ENCODE measurements at regions of chr14 and their contacts with region 1.

Region 1: DNA sequence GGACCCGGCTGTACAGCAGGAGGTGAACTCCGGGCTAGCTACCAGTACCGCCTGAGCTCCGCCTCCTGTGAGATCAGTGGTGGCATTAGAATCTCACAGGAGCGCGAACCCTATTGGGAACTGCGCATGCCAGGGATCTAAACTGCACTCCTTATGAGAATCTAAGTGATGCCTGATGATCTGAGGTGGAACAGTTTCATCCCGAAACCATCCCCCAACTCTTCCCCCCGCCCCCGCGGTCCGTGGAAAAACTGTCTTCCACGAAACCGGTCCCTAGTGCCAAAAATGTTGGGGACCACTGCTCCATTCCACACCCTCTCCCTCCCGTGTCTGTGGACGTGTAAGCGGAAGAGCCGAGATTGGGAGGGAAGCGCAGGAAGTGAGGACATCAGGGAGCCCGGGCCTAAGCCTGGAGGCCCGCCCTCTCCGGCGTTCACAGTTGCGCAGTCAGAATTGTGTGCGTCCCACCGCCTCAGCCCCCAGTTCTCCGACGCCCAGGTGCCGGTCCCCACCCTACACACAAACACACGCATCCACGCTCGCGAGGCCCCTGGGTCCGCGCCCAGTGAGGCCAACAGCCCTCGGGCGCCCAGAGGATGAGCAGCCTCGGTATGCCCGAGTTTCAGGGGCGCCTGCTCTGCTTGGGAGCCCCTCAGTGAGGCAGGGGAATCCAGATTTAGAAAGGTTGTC is 1.8 kb upstream of the RNASE4 start:
- DNase-seq: peak; percentile 89
- H3K4me3 ChIP-seq: peak overlapping the region; percentile 87
- H3K27ac ChIP-seq: peak overlapping the region; percentile 100
- H3K4me1 ChIP-seq: peaks cover 67% of the 10 kb centered on the region
- H3K27me3 ChIP-seq: no peaks in the 10 kb centered on the region
- CTCF ChIP-seq: no peak

Region 2: GRCh38 chr14:20332788-20333493 is 349.6 kb before region 1 on chr14 and contains the start of gene CCNB1IP1:
- intact Hi-C with region 1: loop called (anchors 5 kb)
- DNase-seq: peak; percentile 28
- H3K4me3 ChIP-seq: peak within 1 kb of the TSS; percentile 75
- H3K27ac ChIP-seq: peak within 1 kb of the TSS; percentile 91
- H3K4me1 ChIP-seq: peaks cover 45% of the 10 kb centered on the region
- H3K27me3 ChIP-seq: no peaks in the 10 kb centered on the region
- CTCF ChIP-seq: no peak
- total RNA-seq, gene CCNB1IP1: 53.9 TPM

Measured in left ventricle myocardium inferior (tissue), 1 donor.